Activated B cell treated with CpG ODN at 0.5 μM for 24 hours (primary cell): ENCODE measurements at regions of chr15 and their contacts with region 1.

Region 1: GRCh38 chr15:40893733-40894688 is at the start of gene VPS18:
- DNase-seq: peak; percentile 99
- ATAC-seq: peak; percentile 98
- H3K4me3 Mint-ChIP-seq: peak within 1 kb of the TSS; percentile 98
- H3K27ac Mint-ChIP-seq: peak within 1 kb of the TSS; percentile 90
- H3K4me1 Mint-ChIP-seq: peaks cover 34% of the 10 kb centered on the region
- H3K27me3 Mint-ChIP-seq: no peaks in the 10 kb centered on the region
- CTCF ChIP-seq: peak; percentile 94
- total RNA-seq, gene VPS18: 25.3 and 26.2 TPM in 2 replicates

Region 2: GRCh38 chr15:40593588-40594428 is 300.2 kb before region 1 on chr15 and contains the start of gene KNL1:
- CTCF ChIA-PET with region 1: no interaction called
- POLR2A ChIA-PET with region 1: interaction called, 16 read pairs
- intact Hi-C with region 1: loop called (anchors 1 kb)
- DNase-seq: peak; percentile 84
- ATAC-seq: peak; percentile 83
- H3K4me3 Mint-ChIP-seq: peak within 1 kb of the TSS; percentile 95
- H3K27ac Mint-ChIP-seq: peak within 1 kb of the TSS; percentile 99
- H3K4me1 Mint-ChIP-seq: peaks cover 21% of the 10 kb centered on the region
- H3K27me3 Mint-ChIP-seq: peaks cover 2% of the 10 kb centered on the region
- CTCF ChIP-seq: no peak
- total RNA-seq, gene KNL1: 5.1 and 7.7 TPM in 2 replicates

Region 3: DNA sequence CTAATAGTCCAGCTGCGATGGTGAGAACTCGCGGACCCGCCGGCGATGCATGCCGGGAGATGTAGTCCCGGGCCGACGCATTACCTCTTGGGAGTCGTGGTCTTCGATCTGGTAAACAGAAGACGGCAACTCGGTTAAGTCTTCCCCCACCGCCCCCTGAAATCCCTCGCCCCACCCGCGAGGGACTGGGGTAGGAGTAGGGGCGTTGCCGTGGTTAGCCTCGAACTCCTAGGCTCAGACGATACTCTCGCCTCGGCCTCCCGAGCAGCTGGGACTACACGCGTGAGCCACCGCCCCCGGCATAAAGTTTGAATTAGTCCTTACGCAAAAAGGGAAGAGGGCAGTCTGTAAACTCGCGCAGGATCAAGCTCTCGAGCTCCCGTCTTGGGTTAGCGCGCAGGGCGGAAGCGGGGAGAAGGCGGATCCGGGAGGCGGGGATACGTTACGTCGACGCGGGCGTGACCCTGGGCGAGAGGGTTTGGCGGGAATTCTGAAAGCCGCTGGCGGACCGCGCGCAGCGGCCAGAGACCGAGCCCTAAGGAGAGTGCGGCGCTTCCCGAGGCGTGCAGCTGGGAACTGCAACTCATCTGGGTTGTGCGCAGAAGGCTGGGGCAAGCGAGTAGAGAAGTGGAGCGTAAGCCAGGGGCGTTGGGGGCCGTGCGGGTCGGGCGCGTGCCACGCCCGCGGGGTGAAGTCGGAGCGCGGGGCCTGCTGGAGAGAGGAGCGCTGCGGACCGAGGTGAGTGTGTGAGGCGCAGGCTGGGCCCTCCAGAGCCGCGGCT is 199.1 kb before region 1 on chr15 and contains the start of gene RAD51:
- CTCF ChIA-PET with region 1: interaction called, 3 read pairs
- POLR2A ChIA-PET with region 1: interaction called, 9 read pairs
- intact Hi-C with region 1: loop called (anchors 2 kb)
- DNase-seq: peak; percentile 88
- ATAC-seq: peak; percentile 90
- H3K4me3 Mint-ChIP-seq: peak within 1 kb of the TSS; percentile 99
- H3K27ac Mint-ChIP-seq: peak within 1 kb of the TSS; percentile 98
- H3K4me1 Mint-ChIP-seq: peaks cover 25% of the 10 kb centered on the region
- H3K27me3 Mint-ChIP-seq: no peaks in the 10 kb centered on the region
- CTCF ChIP-seq: no peak
- total RNA-seq, gene RAD51: 2.6 and 4.1 TPM in 2 replicates

Region 4: DNA sequence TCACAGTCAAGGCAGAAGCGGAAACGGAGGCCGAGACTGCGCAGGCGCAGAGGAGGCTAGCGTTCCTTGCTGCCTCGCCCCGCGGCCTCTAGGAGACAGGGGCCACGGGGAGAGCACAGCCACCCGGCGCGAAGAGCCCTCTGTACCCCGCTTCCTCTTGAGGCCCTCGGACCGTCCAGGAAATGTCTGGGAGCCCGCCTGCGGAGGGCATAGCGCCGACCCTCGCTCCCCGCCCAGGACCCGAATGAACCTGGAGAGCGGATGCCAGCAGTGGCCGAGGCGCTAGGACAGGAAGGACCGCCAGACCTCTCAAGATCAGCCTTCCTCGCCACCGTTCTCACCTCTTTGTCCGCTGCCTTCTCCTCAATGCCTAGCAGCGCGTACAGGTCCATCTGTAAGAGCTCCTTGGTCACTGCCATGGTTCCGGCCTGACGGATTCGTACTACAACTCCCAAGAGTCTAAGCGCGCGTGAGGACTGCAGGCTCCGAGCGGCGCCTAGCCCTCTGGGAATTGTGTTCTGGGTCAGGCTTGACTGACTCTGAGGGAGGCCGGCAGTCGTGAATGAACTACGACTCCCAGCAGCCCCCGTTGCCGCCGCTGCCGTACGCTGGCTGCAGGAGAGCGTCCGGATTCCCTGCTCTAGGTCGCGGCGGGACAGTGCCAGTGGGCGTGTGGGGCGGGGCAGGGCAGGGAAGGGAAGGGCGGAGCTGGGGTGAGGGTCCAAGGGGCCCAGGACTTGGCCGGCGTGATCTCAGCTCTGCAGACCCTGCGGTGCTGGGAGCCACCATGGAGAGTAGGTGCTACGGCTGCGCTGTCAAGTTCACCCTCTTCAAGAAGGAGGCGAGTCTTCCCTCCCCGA is 86.8 kb before region 1 on chr15 and contains the starts of genes DNAJC17 and ZFYVE19:
- CTCF ChIA-PET with region 1: interaction called, 5 read pairs
- POLR2A ChIA-PET with region 1: interaction called, 8 read pairs
- intact Hi-C with region 1: loop called (anchors 1 kb)
- DNase-seq: peak; percentile 87
- ATAC-seq: peak; percentile 96
- H3K4me3 Mint-ChIP-seq: peak within 1 kb of the TSS; percentile 99
- H3K27ac Mint-ChIP-seq: peak within 1 kb of the TSS; percentile 100
- H3K4me1 Mint-ChIP-seq: peaks cover 24% of the 10 kb centered on the region
- H3K27me3 Mint-ChIP-seq: no peaks in the 10 kb centered on the region
- CTCF ChIP-seq: no peak
- total RNA-seq, gene DNAJC17: 43.1 and 51.0 TPM in 2 replicates
- total RNA-seq, gene ZFYVE19: 23.2 and 25.2 TPM in 2 replicates

Region 5: GRCh38 chr15:40873625-40874561 is 20.1 kb before region 1 on chr15 and contains the start of gene RHOV:
- CTCF ChIA-PET with region 1: interaction called, 11 read pairs
- POLR2A ChIA-PET with region 1: interaction called, 4 read pairs
- intact Hi-C with region 1: loop called (anchors 1 kb)
- DNase-seq: peak; percentile 51
- ATAC-seq: peak; percentile 77
- H3K4me3 Mint-ChIP-seq: peak within 1 kb of the TSS; percentile 77
- H3K27ac Mint-ChIP-seq: no peak within 1 kb of the TSS
- H3K4me1 Mint-ChIP-seq: peaks cover 28% of the 10 kb centered on the region
- H3K27me3 Mint-ChIP-seq: peaks cover 2% of the 10 kb centered on the region
- CTCF ChIP-seq: no peak
- total RNA-seq, gene RHOV: 0.27 TPM in 1 of 2 replicates, not detected in the other

Region 6: DNA sequence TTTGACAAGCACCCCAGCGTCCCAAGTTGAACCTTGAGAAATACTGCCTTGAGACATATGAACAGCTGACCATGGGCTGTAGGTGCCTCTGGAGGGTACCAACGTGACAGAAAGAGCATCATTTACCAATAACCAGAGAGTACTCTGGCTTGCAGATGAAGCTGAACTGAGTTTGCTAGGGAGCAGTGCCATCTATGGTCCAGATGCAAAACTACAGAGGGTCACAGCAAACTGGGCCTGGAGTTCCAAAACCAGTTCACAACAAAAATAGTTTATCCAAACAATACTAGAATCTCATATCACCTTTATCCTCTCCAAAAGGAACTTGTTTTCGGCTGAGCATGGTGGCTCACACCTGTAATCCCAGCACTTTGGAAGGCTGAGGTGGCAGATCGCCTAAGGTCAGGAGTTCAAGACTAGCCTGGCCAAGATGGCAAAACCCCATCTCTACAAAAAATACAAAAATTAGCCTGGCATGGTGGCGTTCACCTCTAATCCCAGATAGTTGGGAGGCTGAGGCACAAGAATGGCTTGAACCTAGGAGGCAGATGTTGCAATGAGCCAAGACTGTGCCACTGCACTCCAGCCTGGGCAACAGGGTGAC is 128.6 kb after region 1 on chr15:
- CTCF ChIA-PET with region 1: interaction called, 13 read pairs
- POLR2A ChIA-PET with region 1: no interaction called
- intact Hi-C with region 1: no loop called
- DNase-seq: no peak
- ATAC-seq: peak; percentile 66
- H3K4me3 Mint-ChIP-seq: no peak overlapping the region
- H3K27ac Mint-ChIP-seq: no peak overlapping the region
- H3K4me1 Mint-ChIP-seq: no peaks in the 10 kb centered on the region
- H3K27me3 Mint-ChIP-seq: no peaks in the 10 kb centered on the region
- CTCF ChIP-seq: no peak